Activated CD8-positive, alpha-beta memory T cell treated with anti-CD3 and anti-CD28 coated beads, Interleukin-2, amount 10 ng/mL, durations not matched to agents 7 days and 5 days (primary cell): ENCODE measurements at regions of chr21 and their contacts with region 1.

Region 1: DNA sequence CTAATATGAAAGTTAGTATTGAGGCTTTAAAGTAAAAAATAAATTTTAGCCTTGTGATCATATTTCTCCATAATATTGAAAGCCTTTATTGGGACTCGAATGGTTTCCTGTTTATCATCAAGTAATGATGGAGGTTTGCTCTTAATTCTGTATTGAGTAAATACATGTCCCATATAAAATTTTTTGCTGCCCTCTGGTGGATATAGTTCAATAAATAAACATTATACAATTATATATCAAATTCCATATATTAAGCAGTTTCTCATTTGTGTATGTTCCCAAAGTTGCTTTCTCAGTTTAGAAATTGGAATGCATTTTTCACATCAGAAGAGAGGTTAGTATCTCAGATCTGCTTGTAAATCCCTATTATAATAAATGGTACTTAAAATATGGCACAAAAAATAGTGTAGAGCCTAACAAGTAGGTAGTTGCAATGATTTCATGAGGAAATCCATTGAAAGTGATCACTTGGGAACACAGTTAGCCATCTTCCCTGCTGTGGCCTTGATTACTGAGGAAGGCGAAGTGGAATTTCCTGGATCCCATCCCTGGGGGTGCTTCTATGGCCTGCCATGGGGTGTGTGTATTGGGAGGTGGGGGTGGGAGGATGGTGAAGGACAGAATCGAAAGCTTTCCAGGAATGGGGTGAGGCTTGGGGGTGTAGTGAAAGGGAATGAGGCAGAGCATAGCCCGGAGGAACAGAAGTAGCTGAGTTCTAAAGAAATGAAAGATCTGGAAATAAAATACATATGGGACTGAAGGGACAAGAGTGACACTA is 84.1 kb upstream of the C21orf91 start:
- DNase-seq: no peak
- ATAC-seq: peak; percentile 58
- H3K4me3 Mint-ChIP-seq: no peak overlapping the region
- H3K27ac Mint-ChIP-seq: no peak overlapping the region
- H3K4me1 Mint-ChIP-seq: peaks cover 7% of the 10 kb centered on the region
- H3K27me3 Mint-ChIP-seq: peaks cover 2% of the 10 kb centered on the region

Region 2: GRCh38 chr21:17679002-17679600 is 224.1 kb before region 1 on chr21:
- CTCF ChIA-PET with region 1: interaction called, 25 read pairs
- DNase-seq: no peak
- ATAC-seq: peak; percentile 85
- H3K4me3 Mint-ChIP-seq: no peak overlapping the region
- H3K27ac Mint-ChIP-seq: no peak overlapping the region
- H3K4me1 Mint-ChIP-seq: no peaks in the 10 kb centered on the region
- H3K27me3 Mint-ChIP-seq: no peaks in the 10 kb centered on the region

Region 3: DNA sequence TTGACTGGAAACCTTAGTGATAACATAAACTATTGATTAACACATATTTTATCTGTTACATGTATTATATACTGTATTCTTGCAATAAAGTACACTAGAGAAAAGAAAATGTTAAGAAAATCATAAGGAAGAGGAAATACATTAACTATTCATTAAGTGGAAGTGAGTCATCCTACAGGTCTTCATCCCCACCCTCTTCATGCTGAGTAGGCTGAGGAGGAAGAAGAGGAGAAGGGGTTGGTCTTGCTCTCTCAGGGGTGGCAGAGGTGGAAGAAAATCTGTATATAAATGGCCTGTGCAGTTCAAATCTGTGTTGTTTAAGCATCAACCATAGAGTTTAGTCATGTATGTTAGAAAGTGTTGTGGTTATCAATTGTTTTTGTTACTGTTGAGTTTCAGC is 275.3 kb after region 1 on chr21:
- CTCF ChIA-PET with region 1: no interaction called
- DNase-seq: no peak
- ATAC-seq: no peak
- H3K4me3 Mint-ChIP-seq: no peak overlapping the region
- H3K27ac Mint-ChIP-seq: no peak overlapping the region
- H3K4me1 Mint-ChIP-seq: no peaks in the 10 kb centered on the region
- H3K27me3 Mint-ChIP-seq: no peaks in the 10 kb centered on the region